Activated naive CD4-positive, alpha-beta T cell treated with anti-CD3 and anti-CD28 coated beads, Interleukin-2, amount 10 ng/mL, durations not matched to agents 7 days and 5 days (primary cell): ENCODE measurements at regions of chr20 and their contacts with region 1.

Region 1: GRCh38 chr20:54219751-54220426 is 12.0 kb downstream of the PFDN4 start:
- DNase-seq: no peak
- H3K4me3 Mint-ChIP-seq: no peak overlapping the region
- H3K27ac Mint-ChIP-seq: no peak overlapping the region
- H3K4me1 Mint-ChIP-seq: peaks cover 21% of the 10 kb centered on the region
- H3K27me3 Mint-ChIP-seq: no peaks in the 10 kb centered on the region

Region 2: DNA sequence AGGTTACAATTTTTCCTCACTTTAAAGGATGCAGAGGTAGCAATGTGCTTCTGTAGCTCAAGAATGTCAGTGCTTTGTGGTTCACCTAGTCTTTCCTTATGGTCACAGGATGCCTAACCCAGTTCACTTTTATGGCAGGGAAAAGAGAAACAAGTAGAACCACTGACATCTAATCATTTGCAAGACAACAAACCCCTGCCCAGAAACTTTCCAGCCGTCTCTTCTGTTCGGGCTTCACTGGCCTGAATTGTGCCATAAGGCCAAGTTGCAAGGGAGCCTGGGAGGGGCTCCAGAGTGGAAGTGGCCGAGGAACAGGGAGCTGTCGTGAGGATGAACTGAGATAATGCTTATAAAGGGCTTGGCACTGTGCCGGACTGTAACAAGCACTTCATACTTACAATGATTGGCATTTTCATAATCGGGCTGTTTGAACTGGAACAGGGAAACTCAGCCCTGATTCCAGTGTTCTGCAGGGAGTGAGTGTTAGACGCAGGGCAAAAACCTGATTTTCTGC is 362.1 kb before region 1 on chr20:
- CTCF ChIA-PET with region 1: no interaction called
- DNase-seq: no peak
- H3K4me3 Mint-ChIP-seq: no peak overlapping the region
- H3K27ac Mint-ChIP-seq: no peak overlapping the region
- H3K4me1 Mint-ChIP-seq: peaks cover 34% of the 10 kb centered on the region
- H3K27me3 Mint-ChIP-seq: no peaks in the 10 kb centered on the region

Region 3: DNA sequence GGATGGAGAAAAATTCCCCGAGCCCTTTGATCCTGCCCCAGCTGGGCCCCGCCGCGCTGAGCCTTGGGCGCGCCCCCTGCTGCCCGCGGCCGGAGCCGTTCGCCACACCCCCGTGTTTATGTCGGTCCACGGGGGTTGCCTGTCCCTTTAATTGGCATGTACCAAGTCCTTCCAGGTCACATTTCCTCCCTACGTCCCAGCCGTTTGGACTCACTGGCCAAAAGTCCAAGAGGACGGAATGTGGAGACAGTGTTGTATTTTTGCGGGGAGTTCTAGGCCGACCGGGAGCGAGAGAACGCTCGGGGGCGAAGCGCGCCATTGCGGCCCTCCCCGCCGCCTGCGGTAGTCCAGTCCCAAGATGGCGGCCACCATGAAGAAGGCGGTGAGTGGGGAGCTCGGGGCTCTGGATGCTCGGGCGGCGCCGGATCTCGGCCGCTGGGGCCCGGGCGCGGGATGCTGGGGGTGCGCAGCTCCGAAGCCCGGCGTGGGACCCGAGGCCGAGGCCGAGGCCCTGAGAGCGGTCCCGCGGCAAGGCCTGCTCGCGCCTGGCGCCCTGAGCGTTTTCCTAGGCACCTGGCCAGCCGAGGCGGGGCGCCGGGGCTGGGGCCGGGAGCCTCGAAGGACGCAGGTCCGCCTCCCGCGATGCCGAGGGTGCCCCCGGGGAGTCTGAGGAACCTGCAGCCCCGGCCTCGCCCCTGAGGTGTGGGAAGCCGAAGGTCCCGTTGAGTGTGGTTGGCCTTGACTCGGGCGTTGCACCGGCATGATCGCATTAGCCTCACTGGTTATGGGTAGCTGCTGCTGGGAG is 11.9 kb before region 1 on chr20 and contains the start of gene PFDN4:
- CTCF ChIA-PET with region 1: interaction called, 12 read pairs
- DNase-seq: peak; percentile 82
- H3K4me3 Mint-ChIP-seq: peak within 1 kb of the TSS; percentile 89
- H3K27ac Mint-ChIP-seq: peak within 1 kb of the TSS; percentile 97
- H3K4me1 Mint-ChIP-seq: peaks cover 25% of the 10 kb centered on the region
- H3K27me3 Mint-ChIP-seq: peaks cover 6% of the 10 kb centered on the region

Region 4: DNA sequence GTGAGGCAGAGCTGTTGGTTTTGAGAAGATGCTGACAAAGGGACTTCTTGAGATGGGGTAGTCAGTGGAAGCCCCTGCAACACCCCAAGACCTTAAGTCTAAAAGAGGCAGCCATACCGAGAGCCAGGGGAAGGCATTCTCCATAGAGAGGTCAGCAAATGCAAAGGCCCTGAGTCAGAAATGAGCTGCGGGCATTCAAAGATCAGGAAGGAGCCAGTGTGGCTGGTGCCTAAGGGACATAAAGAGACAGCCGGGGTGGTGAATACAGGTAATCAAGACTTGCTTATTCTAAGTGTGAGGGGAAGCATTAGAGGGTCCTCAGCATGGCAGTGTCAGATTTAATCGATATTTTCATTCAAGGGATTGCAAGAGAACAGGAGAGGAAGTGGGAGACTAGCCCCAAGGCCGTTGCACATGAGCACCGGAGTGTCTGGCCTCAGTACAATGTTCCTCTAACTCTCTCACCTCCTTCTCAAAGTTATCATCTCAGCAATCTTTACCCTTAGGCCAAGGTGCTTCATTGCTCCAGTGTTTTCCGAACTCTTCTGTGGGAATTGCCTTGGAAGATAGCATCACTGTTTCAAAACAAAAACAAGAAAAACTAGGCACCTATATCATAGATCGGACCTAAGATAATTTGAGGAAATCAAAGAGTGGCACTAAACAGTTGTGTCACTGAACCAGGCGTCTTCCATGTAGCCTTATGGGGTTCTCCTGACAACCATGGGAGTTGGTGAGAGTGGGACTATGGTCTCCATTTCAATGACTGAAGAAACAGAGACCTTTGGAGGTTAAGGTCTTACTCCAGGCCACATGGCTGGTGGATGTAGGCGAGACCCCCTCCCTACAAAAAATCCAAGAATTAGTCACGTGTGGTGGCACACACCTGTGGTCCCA is 428.8 kb after region 1 on chr20:
- CTCF ChIA-PET with region 1: interaction called, 11 read pairs
- DNase-seq: no peak
- H3K4me3 Mint-ChIP-seq: no peak overlapping the region
- H3K27ac Mint-ChIP-seq: no peak overlapping the region
- H3K4me1 Mint-ChIP-seq: no peaks in the 10 kb centered on the region
- H3K27me3 Mint-ChIP-seq: no peaks in the 10 kb centered on the region